Stomach (tissue), 19 donors: ENCODE measurements at regions of chr1 and their contacts with region 1.

Region 1: GRCh38 chr1:47710329-47711071 is 272.7 kb downstream of the FOXD2 start:
- DNase-seq: peak; percentile 83 to 89
- H3K4me3 ChIP-seq: peak overlapping the region; percentile 33 to 49 (median 36)
- H3K27ac ChIP-seq: no peak overlapping the region
- H3K4me1 ChIP-seq: peaks cover 23 to 33% (median 28%) of the 10 kb centered on the region in 4 donors
- H3K27me3 ChIP-seq: peaks cover 25 to 94% (median 66%) of the 10 kb centered on the region in 3 donors
- CTCF ChIP-seq: peak in 6 of 7 experiments; percentile 11 to 99 (median 94)
- EP300 ChIP-seq: no peak
- POLR2A ChIP-seq: no peak

Region 2: GRCh38 chr1:47192458-47193384 is 517.8 kb before region 1 on chr1:
- intact Hi-C with region 1: loop called (anchors 10 kb)
- DNase-seq: peak; percentile 83 to 91
- H3K4me3 ChIP-seq: no peak overlapping the region
- H3K27ac ChIP-seq: peak overlapping the region in 3 of 5 donors; percentile 84 to 89 (median 86)
- H3K4me1 ChIP-seq: peaks cover 23 to 44% (median 36%) of the 10 kb centered on the region in 4 donors
- H3K27me3 ChIP-seq: peaks cover 0 to 4% (median 0%) of the 10 kb centered on the region in 3 donors
- CTCF ChIP-seq: peak in 5 of 7 experiments; percentile 86 to 94 (median 93)
- EP300 ChIP-seq: no peak
- POLR2A ChIP-seq: no peak

Region 3: GRCh38 chr1:47432071-47433036 is 278.1 kb before region 1 on chr1:
- intact Hi-C with region 1: loop called (anchors 5 kb)
- DNase-seq: peak; percentile 86 to 94
- H3K4me3 ChIP-seq: peak overlapping the region in 3 of 4 donors; percentile 13 to 30 (median 20)
- H3K27ac ChIP-seq: no peak overlapping the region
- H3K4me1 ChIP-seq: peaks cover 40 to 58% (median 47%) of the 10 kb centered on the region in 4 donors
- H3K27me3 ChIP-seq: peaks cover 24 to 100% (median 38%) of the 10 kb centered on the region in 3 donors
- CTCF ChIP-seq: peak in 5 of 7 experiments; percentile 53 to 72 (median 53)
- EP300 ChIP-seq: no peak
- POLR2A ChIP-seq: no peak

Region 4: GRCh38 chr1:47532921-47533792 is 177.3 kb before region 1 on chr1:
- intact Hi-C with region 1: loop called (anchors 10 kb)
- DNase-seq: peak; percentile 35 to 90
- H3K4me3 ChIP-seq: peak overlapping the region; percentile 44 to 51 (median 48)
- H3K27ac ChIP-seq: peak overlapping the region in 3 of 5 donors; percentile 40 to 69 (median 43)
- H3K4me1 ChIP-seq: peaks cover 12 to 34% (median 21%) of the 10 kb centered on the region in 4 donors
- H3K27me3 ChIP-seq: peaks cover 0 to 27% (median 11%) of the 10 kb centered on the region in 3 donors
- CTCF ChIP-seq: no peak
- EP300 ChIP-seq: no peak
- POLR2A ChIP-seq: no peak

Region 5: DNA sequence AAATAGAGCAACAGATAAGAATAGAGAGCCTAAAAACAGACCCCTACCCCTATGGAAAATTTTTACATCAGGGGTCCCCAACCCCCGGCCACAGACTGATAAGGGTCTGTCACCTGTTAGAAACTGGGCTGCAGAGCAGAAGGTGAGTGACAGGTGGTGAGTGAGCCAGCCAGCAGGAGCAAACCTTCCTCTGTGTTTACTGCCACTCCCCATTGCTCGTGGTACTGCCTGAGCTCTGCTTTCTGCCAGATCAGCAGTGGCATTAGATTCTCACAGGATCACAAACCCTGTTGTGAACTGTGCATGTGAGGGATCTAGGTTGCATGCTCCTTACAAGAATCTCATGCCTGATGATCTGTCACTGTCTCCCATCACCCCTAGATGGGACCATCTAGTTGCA is 98.5 kb before region 1 on chr1:
- intact Hi-C with region 1: no loop called
- DNase-seq: no peak
- H3K4me3 ChIP-seq: no peak overlapping the region
- H3K27ac ChIP-seq: no peak overlapping the region
- H3K4me1 ChIP-seq: no peaks in the 10 kb centered on the region
- H3K27me3 ChIP-seq: peaks cover 0 to 5% (median 0%) of the 10 kb centered on the region in 3 donors
- CTCF ChIP-seq: no peak
- EP300 ChIP-seq: no peak
- POLR2A ChIP-seq: no peak

Region 6: GRCh38 chr1:47650197-47650596 is 60.3 kb before region 1 on chr1:
- intact Hi-C with region 1: no loop called
- DNase-seq: peak; percentile 25 to 70
- H3K4me3 ChIP-seq: no peak overlapping the region
- H3K27ac ChIP-seq: no peak overlapping the region
- H3K4me1 ChIP-seq: no peaks in the 10 kb centered on the region
- H3K27me3 ChIP-seq: no peaks in the 10 kb centered on the region
- CTCF ChIP-seq: no peak
- EP300 ChIP-seq: no peak
- POLR2A ChIP-seq: no peak

Region 7: GRCh38 chr1:48552420-48552819 is 841.9 kb after region 1 on chr1:
- intact Hi-C with region 1: no loop called
- DNase-seq: peak in 1 of 2 donors; percentile 32
- H3K4me3 ChIP-seq: no peak overlapping the region
- H3K27ac ChIP-seq: no peak overlapping the region
- H3K4me1 ChIP-seq: peaks cover 0 to 9% (median 0%) of the 10 kb centered on the region in 4 donors
- H3K27me3 ChIP-seq: no peaks in the 10 kb centered on the region
- CTCF ChIP-seq: no peak
- EP300 ChIP-seq: no peak
- POLR2A ChIP-seq: no peak